CD8-positive, alpha-beta memory T cell (primary cell): ENCODE measurements at regions of chr1 and their contacts with region 1.

Region 1: DNA sequence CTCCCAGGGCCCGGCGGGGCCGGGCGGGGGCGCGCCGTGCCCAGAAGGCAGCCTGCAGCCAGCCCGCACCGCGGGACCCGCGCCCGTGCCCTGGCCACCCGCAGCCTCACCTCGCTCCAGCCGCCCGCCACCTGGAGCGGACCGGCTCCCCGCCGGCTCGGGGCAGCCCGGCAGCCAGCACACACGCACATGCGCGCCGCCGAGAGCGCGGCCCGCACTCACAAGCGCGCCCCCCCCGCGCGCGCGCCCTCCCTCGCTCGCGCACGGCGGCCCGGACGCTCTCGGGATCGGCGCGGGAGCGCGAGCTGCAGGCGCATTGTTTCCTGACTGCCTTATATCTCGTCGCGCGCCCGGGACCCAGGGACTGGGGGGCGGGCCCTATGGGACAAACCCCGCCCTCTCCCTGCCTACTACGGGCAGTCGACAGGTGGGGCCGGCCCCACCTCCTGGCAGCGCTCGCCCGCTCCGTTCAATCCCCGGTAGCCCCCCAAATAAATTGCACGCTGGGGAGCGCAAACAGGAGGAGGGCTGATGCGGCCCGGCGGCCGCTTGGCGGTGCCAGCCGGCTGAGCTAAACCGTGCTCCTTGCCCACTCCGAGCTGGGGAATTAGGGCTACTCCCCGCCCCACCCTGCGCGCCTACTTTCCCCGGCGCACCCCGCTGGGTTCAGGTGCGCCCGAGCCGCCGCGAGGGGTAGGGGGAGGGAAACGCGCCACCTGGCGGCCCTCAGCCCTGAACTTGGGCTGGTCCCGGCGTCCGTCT is at the start of gene MYCL:
- DNase-seq: peak; percentile 46 to 76 (median 58)
- H3K4me3 ChIP-seq: peak within 1 kb of the TSS; percentile 61
- H3K4me3 Mint-ChIP-seq: peak within 1 kb of the TSS; percentile 74 to 89 (median 77)
- H3K27ac ChIP-seq: peak within 1 kb of the TSS; percentile 50
- H3K27ac Mint-ChIP-seq: peak within 1 kb of the TSS in 1 of 8 donors; percentile 38
- H3K4me1 ChIP-seq: peaks cover 5% of the 10 kb centered on the region
- H3K4me1 Mint-ChIP-seq: peaks cover 8 to 9% (median 8%) of the 10 kb centered on the region in 3 donors
- H3K27me3 ChIP-seq: peaks cover 19% of the 10 kb centered on the region
- H3K27me3 Mint-ChIP-seq: peaks cover 31 to 64% of the 10 kb centered on the region in 2 donors
- total RNA-seq, gene MYCL: 0.24 TPM in 1 of 2 experiments, not detected in the other

Region 2: GRCh38 chr1:39639305-39640130 is 262.4 kb before region 1 on chr1 and contains the start of gene HEYL:
- CTCF ChIA-PET with region 1: no interaction called
- POLR2A ChIA-PET with region 1: no interaction called
- DNase-seq: peak; percentile 24 to 53 (median 43)
- H3K4me3 ChIP-seq: no peak within 1 kb of the TSS
- H3K4me3 Mint-ChIP-seq: peak within 1 kb of the TSS; percentile 38 to 73 (median 54)
- H3K27ac ChIP-seq: no peak within 1 kb of the TSS
- H3K27ac Mint-ChIP-seq: peak within 1 kb of the TSS in 1 of 8 donors; percentile 68
- H3K4me1 ChIP-seq: no peaks in the 10 kb centered on the region
- H3K4me1 Mint-ChIP-seq: peaks cover 1 to 5% (median 3%) of the 10 kb centered on the region in 3 donors
- H3K27me3 ChIP-seq: peaks cover 16% of the 10 kb centered on the region
- H3K27me3 Mint-ChIP-seq: peaks cover 23 to 52% of the 10 kb centered on the region in 2 donors
- total RNA-seq, gene HEYL: 0.07 to 0.09 TPM

Region 3: DNA sequence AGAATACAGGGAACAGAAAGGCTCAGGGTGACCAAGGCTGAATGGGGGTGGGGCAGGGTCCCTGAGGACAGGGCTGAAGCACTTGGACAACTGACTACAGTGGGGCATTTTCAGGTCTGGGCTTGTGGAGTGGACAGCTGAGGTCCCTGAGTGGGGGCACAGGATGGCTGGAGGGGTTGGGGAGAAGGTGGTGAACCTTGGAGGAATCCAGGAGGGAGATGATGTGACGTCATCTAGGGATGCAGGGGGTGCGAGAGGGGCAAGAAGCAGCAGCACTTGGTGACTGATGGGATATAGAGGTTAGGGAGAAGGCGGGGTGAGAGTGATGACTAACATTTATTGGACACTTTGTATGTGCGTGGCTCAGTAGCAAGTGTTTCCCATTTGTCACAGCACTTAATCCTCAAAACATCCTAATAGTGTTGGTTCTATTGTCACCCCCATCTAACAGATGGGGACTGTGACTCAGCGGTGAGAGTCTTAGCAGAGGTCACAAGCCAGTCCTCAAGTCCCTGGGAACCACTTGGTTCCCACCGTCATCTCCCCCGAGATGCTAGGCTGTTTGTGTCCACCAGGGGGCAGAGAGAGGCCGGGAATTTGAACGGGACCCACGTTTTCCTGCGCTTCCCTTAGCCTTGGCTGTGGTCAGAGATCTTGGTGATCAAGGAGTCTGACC is 85.3 kb before region 1 on chr1:
- CTCF ChIA-PET with region 1: interaction called, 110 read pairs
- POLR2A ChIA-PET with region 1: no interaction called
- DNase-seq: peak; percentile 32 to 67 (median 51)
- H3K4me3 ChIP-seq: no peak overlapping the region
- H3K4me3 Mint-ChIP-seq: peak overlapping the region; percentile 18 to 88 (median 79)
- H3K27ac ChIP-seq: no peak overlapping the region
- H3K27ac Mint-ChIP-seq: no peak overlapping the region
- H3K4me1 ChIP-seq: peaks cover 5% of the 10 kb centered on the region
- H3K4me1 Mint-ChIP-seq: peaks cover 5 to 11% (median 6%) of the 10 kb centered on the region in 3 donors
- H3K27me3 ChIP-seq: peaks cover 5% of the 10 kb centered on the region
- H3K27me3 Mint-ChIP-seq: peaks cover 3 to 30% of the 10 kb centered on the region in 2 donors

Region 4: DNA sequence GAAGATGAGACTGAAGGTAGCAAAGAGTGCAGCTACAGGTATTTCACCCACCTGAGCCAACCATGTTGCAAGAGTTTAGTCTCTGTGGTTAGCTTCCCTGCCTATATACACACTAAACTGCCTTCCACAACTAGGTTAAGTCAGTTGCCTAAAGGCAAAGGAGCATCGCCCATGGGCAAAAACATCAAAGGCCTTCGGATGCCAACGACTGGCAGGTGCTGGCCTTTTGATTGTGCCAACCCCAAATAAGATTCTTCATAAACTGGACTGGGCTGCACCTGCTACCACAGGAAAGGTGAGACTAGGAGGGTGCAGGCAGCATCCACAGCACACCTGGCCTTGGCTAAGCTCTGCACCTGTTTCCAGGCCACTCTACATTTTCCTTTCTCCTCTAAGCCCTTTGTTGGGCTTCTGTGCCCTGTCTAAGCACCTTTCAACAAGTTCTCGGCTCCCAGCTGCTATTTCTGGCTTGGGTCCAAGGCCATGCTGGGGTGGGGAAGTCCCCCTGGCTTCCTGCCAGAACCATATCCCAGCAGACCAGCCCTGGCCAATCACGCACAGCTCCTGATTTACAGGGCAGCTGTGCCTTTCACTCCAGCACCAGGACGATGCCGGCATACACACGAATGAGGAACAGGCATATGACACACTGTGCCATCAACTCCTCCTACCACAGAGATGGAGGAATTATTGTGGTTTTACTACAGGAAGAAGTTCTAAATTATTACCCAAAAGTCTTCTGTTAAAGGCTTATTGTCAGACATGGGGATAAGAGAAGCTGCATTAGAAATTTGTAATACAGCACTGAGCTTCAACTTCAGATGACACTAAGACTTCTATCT is 56.4 kb before region 1 on chr1:
- CTCF ChIA-PET with region 1: interaction called, 14 read pairs
- POLR2A ChIA-PET with region 1: no interaction called
- DNase-seq: peak; percentile 68 to 89 (median 79)
- H3K4me3 ChIP-seq: no peak overlapping the region
- H3K4me3 Mint-ChIP-seq: peak overlapping the region in 5 of 7 donors; percentile 56 to 89 (median 69)
- H3K27ac ChIP-seq: peak overlapping the region; percentile 35
- H3K27ac Mint-ChIP-seq: peak overlapping the region; percentile 90 to 99 (median 94)
- H3K4me1 ChIP-seq: peaks cover 58% of the 10 kb centered on the region
- H3K4me1 Mint-ChIP-seq: peaks cover 50 to 60% (median 60%) of the 10 kb centered on the region in 3 donors
- H3K27me3 ChIP-seq: no peaks in the 10 kb centered on the region
- H3K27me3 Mint-ChIP-seq: no peaks in the 10 kb centered on the region

Region 5: GRCh38 chr1:39882152-39882551 is 19.7 kb before region 1 on chr1:
- CTCF ChIA-PET with region 1: interaction called, 10 read pairs
- POLR2A ChIA-PET with region 1: interaction called, 4 read pairs
- DNase-seq: no peak
- H3K4me3 ChIP-seq: peak overlapping the region; percentile 83
- H3K4me3 Mint-ChIP-seq: peak overlapping the region; percentile 93 to 100 (median 96)
- H3K27ac ChIP-seq: peak overlapping the region; percentile 75
- H3K27ac Mint-ChIP-seq: peak overlapping the region in 7 of 8 donors; percentile 34 to 93 (median 83)
- H3K4me1 ChIP-seq: peaks cover 17% of the 10 kb centered on the region
- H3K4me1 Mint-ChIP-seq: peaks cover 34 to 54% (median 51%) of the 10 kb centered on the region in 3 donors
- H3K27me3 ChIP-seq: no peaks in the 10 kb centered on the region
- H3K27me3 Mint-ChIP-seq: peaks cover 0 to 1% of the 10 kb centered on the region in 2 donors